WTC11 (cell line): ENCODE measurements at regions of chr16 and their contacts with region 1.

Region 1: GRCh38 chr16:2194852-2195321 is 1.5 kb downstream of the CASKIN1 start:
- DNase-seq: peak; percentile 73
- ATAC-seq: peak; percentile 73
- H3K4me3 Mint-ChIP-seq: peak overlapping the region; percentile 66
- H3K27ac Mint-ChIP-seq: no peak overlapping the region
- H3K4me1 Mint-ChIP-seq: peaks cover 4% of the 10 kb centered on the region; the same call in 1 of the 2 replicates
- H3K27me3 Mint-ChIP-seq: peaks cover 27% of the 10 kb centered on the region
- CTCF ChIP-seq: 0 out of 2 replicates have a peak, but pooled peaks have one; percentile 33

Region 2: DNA sequence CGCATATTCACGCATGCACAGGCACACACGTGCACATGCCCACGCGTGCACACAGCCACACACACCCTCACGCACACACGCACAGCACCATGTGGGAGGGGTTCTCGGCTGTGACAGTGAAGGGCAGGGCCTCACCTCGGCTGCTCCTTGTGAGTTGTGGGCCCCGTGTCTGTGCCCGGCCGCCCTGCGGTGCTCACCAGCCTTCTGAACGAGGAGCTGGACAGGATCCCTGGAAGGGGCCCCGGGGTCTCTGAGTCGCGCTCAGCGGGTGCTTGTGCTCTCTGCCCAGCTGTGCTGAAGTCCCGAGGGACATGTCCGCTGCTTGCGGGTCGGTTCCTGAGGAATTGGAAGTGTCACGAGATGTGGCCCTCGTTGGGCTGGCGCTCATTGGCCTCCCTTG is 131.0 kb before region 1 on chr16:
- CTCF ChIA-PET with region 1: no interaction called
- POLR2A ChIA-PET with region 1: no interaction called
- DNase-seq: no peak
- ATAC-seq: no peak
- H3K4me3 Mint-ChIP-seq: no peak overlapping the region
- H3K27ac Mint-ChIP-seq: peak overlapping the region; percentile 50; the same call in 1 of the 2 replicates
- H3K4me1 Mint-ChIP-seq: no peaks in the 10 kb centered on the region
- H3K27me3 Mint-ChIP-seq: no peaks in the 10 kb centered on the region
- CTCF ChIP-seq: no peak

Region 3: GRCh38 chr16:2147981-2148671 is 46.8 kb before region 1 on chr16 and contains the start of gene RAB26:
- CTCF ChIA-PET with region 1: interaction called, 10 read pairs
- POLR2A ChIA-PET with region 1: interaction called, 7 read pairs
- DNase-seq: peak; percentile 82
- ATAC-seq: 0 out of 2 replicates have a peak, but pooled peaks have one; percentile 0
- H3K4me3 Mint-ChIP-seq: peak within 1 kb of the TSS; percentile 97
- H3K27ac Mint-ChIP-seq: no peak within 1 kb of the TSS
- H3K4me1 Mint-ChIP-seq: peaks cover 28% of the 10 kb centered on the region
- H3K27me3 Mint-ChIP-seq: peaks cover 36% of the 10 kb centered on the region
- CTCF ChIP-seq: no peak
- total RNA-seq, gene RAB26: 6.2 to 7.3 TPM (median 6.9 TPM) in 3 replicates

Region 4: GRCh38 chr16:2205104-2205966 is 10.4 kb after region 1 on chr16 and contains the start of gene MLST8:
- CTCF ChIA-PET with region 1: interaction called, 28 read pairs
- POLR2A ChIA-PET with region 1: interaction called, 5 read pairs
- DNase-seq: peak; percentile 69
- ATAC-seq: peak; percentile 69
- H3K4me3 Mint-ChIP-seq: peak within 1 kb of the TSS; percentile 80
- H3K27ac Mint-ChIP-seq: peak within 1 kb of the TSS; percentile 95
- H3K4me1 Mint-ChIP-seq: peaks cover 13% of the 10 kb centered on the region
- H3K27me3 Mint-ChIP-seq: peaks cover 24% of the 10 kb centered on the region
- CTCF ChIP-seq: no peak
- total RNA-seq, gene MLST8: 71.6 to 76.1 TPM (median 75.9 TPM) in 3 replicates

Region 5: GRCh38 chr16:2223375-2224182 is 28.7 kb after region 1 on chr16 and contains the start of gene E4F1:
- CTCF ChIA-PET with region 1: interaction called, 11 read pairs
- POLR2A ChIA-PET with region 1: no interaction called
- DNase-seq: peak; percentile 100
- ATAC-seq: peak; percentile 97
- H3K4me3 Mint-ChIP-seq: peak within 1 kb of the TSS; percentile 76
- H3K27ac Mint-ChIP-seq: no peak within 1 kb of the TSS; the same call in 1 of the 2 replicates
- H3K4me1 Mint-ChIP-seq: peaks cover 3% of the 10 kb centered on the region; the same call in 1 of the 2 replicates
- H3K27me3 Mint-ChIP-seq: no peaks in the 10 kb centered on the region
- CTCF ChIP-seq: no peak
- total RNA-seq, gene E4F1: 27.2 to 34.4 TPM (median 27.8 TPM) in 3 replicates

Region 6: DNA sequence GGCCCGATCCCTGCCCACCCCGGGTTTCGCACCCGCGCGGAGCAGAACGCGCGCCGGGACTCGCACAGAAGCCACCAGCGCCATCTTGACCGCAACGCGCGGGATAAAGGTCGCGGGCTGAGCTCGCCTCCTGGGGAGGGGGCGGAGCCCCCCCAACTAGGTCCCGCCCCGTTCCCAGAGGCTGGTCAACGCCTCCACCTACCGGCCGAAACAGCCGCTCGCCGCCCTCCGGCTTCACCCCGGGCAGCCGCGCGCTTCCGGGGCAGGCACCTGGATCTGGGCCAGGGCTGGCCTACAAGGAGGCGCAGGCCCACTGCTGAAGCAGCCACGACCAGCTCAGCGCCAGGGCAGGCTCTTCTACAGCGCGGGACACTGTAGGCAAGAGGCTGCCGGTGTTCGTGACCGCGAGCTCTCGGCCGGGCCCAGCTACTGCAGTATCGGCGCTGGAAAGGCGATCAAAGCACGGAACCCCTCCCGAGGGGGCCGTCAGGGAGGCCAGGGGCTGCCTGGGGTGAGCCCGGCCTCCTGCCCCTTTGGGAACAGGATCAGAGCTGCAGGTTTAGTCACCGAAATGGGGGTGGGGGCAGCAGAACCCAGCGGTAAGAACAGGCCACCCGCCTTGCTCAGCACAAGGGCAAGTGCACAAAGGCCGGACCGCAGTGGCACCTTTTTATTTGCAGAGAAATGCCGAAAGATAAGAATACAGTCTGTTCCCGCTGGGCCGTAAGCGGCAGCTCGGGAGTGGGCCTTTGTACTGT is 56.8 kb after region 1 on chr16 and contains the start of gene ECI1:
- CTCF ChIA-PET with region 1: interaction called, 62 read pairs
- POLR2A ChIA-PET with region 1: interaction called, 12 read pairs
- DNase-seq: peak; percentile 94
- ATAC-seq: peak; percentile 93
- H3K4me3 Mint-ChIP-seq: peak within 1 kb of the TSS; percentile 92
- H3K27ac Mint-ChIP-seq: peak within 1 kb of the TSS; percentile 98
- H3K4me1 Mint-ChIP-seq: peaks cover 9% of the 10 kb centered on the region
- H3K27me3 Mint-ChIP-seq: no peaks in the 10 kb centered on the region
- CTCF ChIP-seq: peak; percentile 13; the same call in 1 of the 2 replicates
- total RNA-seq, gene ECI1: 100 to 110 TPM (median 106 TPM) in 3 replicates